Mammary epithelial cell (primary cell): ENCODE measurements at regions of chr4 and their contacts with region 1.

Region 1: GRCh38 chr4:13484122-13484748 is at the start of gene RAB28:
- DNase-seq: peak; percentile 91
- H3K4me3 ChIP-seq: peak within 1 kb of the TSS; percentile 87 to 93 (median 91)
- H3K27ac ChIP-seq: peak within 1 kb of the TSS; percentile 100
- H3K4me1 ChIP-seq: peaks cover 19% of the 10 kb centered on the region
- H3K27me3 ChIP-seq: no peaks in the 10 kb centered on the region
- CTCF ChIP-seq: no peak
- total RNA-seq, gene RAB28: 13.0 to 20.0 TPM

Region 2: GRCh38 chr4:13193662-13194061 is 290.6 kb before region 1 on chr4:
- CTCF ChIA-PET with region 1: no interaction called
- dilution Hi-C with region 1: no loop called
- in situ Hi-C with region 1: no loop called
- intact Hi-C with region 1: no loop called
- DNase-seq: no peak
- H3K4me3 ChIP-seq: no peak overlapping the region
- H3K27ac ChIP-seq: no peak overlapping the region
- H3K4me1 ChIP-seq: no peaks in the 10 kb centered on the region
- H3K27me3 ChIP-seq: no peaks in the 10 kb centered on the region
- CTCF ChIP-seq: no peak

Region 3: DNA sequence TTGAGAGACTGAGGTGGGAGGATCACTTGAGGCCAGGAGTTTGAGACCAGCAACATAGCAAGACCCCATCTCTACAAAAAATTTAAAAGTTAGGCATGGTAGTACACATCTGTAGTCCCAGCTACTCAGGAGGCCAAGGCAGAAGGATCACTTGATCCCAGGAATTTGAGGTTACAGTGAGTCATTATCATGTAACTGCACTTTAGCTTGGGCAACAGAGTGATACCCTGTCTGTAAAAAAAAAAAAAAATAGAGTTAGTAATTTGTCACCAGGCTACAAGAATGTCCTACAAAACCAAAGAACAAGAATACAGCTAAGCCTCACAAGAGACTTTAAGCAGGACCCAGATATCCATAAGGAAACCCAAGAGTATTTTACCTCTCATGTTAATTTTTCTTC is 26.9 kb after region 1 on chr4:
- CTCF ChIA-PET with region 1: no interaction called
- dilution Hi-C with region 1: no loop called
- in situ Hi-C with region 1: no loop called
- intact Hi-C with region 1: no loop called
- DNase-seq: no peak
- H3K4me3 ChIP-seq: no peak overlapping the region
- H3K27ac ChIP-seq: no peak overlapping the region
- H3K4me1 ChIP-seq: no peaks in the 10 kb centered on the region
- H3K27me3 ChIP-seq: peaks cover 5% of the 10 kb centered on the region
- CTCF ChIP-seq: no peak

Region 4: GRCh38 chr4:13527981-13528820 is 44.0 kb after region 1 on chr4:
- CTCF ChIA-PET with region 1: no interaction called
- dilution Hi-C with region 1: no loop called
- in situ Hi-C with region 1: no loop called
- intact Hi-C with region 1: loop called (anchors 5 kb)
- DNase-seq: peak; percentile 49
- H3K4me3 ChIP-seq: peak overlapping the region in 1 of 3 experiments; percentile 18
- H3K27ac ChIP-seq: no peak overlapping the region
- H3K4me1 ChIP-seq: peaks cover 11% of the 10 kb centered on the region
- H3K27me3 ChIP-seq: peaks cover 56% of the 10 kb centered on the region
- CTCF ChIP-seq: no peak

Region 5: GRCh38 chr4:13541720-13542576 is 57.7 kb after region 1 on chr4:
- CTCF ChIA-PET with region 1: no interaction called
- dilution Hi-C with region 1: no loop called
- in situ Hi-C with region 1: no loop called
- intact Hi-C with region 1: loop called (anchors 2 kb)
- DNase-seq: no peak
- H3K4me3 ChIP-seq: peak overlapping the region in 2 of 3 experiments; percentile 24 to 25
- H3K27ac ChIP-seq: no peak overlapping the region
- H3K4me1 ChIP-seq: peaks cover 14% of the 10 kb centered on the region
- H3K27me3 ChIP-seq: peaks cover 47% of the 10 kb centered on the region
- CTCF ChIP-seq: peak; percentile 12 to 56

Region 6: DNA sequence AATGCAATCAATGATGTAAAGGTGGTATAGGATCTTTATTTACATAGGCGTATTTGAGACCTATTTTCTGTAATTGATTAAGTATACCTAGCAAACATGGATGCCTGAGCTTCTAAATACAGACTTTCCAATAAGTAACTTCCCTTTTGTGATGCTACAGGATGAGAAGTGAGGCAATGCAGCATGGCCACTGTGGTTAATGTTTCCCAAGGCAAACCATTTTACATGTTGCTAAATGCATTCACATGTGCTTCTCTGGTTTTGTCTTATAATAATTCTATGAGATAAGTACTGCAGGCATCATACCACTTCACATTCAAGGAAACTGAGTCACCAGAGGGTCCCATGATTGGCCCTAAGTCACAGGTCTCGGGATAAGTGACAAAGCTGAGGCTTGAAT is 95.8 kb after region 1 on chr4:
- CTCF ChIA-PET with region 1: no interaction called
- dilution Hi-C with region 1: no loop called
- in situ Hi-C with region 1: no loop called
- intact Hi-C with region 1: no loop called
- DNase-seq: no peak
- H3K4me3 ChIP-seq: no peak overlapping the region
- H3K27ac ChIP-seq: no peak overlapping the region
- H3K4me1 ChIP-seq: no peaks in the 10 kb centered on the region
- H3K27me3 ChIP-seq: no peaks in the 10 kb centered on the region
- CTCF ChIP-seq: no peak